K562 (cell line): ENCODE measurements at regions of chr2 and their contacts with region 1.

Region 1: DNA sequence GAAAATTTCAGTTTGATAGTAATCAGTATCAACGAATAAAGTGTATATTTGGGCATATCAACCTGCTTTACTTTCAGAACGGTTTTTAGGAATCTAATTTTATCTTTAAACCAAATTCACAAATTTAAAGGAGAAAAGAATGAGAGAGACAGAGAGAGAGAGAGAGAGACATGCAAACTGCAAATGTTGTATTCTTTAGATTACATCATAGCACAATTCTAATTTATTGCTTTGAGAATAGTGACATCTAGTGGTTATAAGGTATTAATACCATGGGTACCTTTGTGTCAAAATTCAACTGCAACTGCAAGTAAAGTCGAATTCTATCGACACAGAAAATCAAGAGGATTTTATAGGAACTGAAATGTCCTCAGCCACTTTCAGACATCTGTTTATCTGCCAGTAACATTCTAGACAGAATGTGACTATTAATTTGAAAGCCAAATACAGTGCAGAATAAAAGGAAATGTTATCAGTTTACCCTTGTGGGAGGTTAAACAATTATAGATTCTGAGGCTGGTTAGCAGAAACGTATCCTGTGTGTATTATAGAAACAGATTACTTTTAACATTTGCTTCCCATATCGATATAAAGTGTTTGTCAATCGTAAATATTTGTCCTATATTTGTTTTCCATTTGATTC is 529.8 kb upstream of the VRK2 start:
- DNase-seq: peak; percentile 24 to 37 (median 33)
- ATAC-seq: peak; percentile 74
- H3K4me3 ChIP-seq: no peak overlapping the region
- H3K27ac ChIP-seq: no peak overlapping the region
- H3K4me1 ChIP-seq: no peaks in the 10 kb centered on the region
- H3K27me3 ChIP-seq: no peaks in the 10 kb centered on the region
- CTCF ChIP-seq: peak in 2 of 3 experiments; percentile 40 to 69; a peak in 3 of 6 replicates
- EP300 ChIP-seq: no peak
- POLR2A ChIP-seq: no peak
- RAD21 ChIP-seq: peak; percentile 58 to 77

Region 2: DNA sequence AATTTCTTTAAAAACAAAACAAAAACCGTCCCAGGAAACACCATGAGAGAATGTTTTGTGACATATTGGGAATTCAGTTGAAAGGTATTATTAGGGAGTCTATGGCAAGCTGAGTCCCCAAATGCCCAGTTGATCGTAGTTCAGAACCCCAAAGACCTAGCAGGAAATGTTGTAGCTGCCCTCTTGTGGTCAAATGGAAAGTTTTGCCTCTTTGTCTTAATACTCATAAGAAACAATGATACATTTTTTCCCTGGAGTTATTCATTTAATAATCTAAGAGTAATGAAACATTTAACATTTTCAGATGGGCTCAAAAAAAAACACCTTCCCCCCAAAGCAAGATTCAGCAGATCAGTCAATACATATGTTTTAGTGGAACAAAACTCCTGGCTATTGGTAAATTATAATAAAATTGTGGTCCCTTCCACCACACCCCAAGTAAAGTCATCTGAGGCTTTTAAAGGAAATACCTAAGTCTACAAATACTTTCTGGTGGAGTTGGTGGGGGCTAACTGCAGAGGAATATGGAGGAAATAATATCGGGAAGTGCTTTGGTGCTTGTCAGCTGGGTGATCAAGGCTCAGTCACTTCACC is 1555.4 kb before region 1 on chr2:
- CTCF ChIA-PET with region 1: no interaction called
- POLR2A ChIA-PET with region 1: no interaction called
- in situ Hi-C with region 1: loop called (anchors 25 kb)
- intact Hi-C with region 1: no loop called
- DNase-seq: peak; percentile 31 to 48 (median 40)
- ATAC-seq: peak; percentile 76
- H3K4me3 ChIP-seq: no peak overlapping the region
- H3K27ac ChIP-seq: no peak overlapping the region
- H3K4me1 ChIP-seq: no peaks in the 10 kb centered on the region; a peak in 1 of 5 replicates
- H3K27me3 ChIP-seq: no peaks in the 10 kb centered on the region; a peak in 1 of 5 replicates
- CTCF ChIP-seq: peak; percentile 37 to 69 (median 52); a peak in 5 of 6 replicates
- EP300 ChIP-seq: no peak
- POLR2A ChIP-seq: no peak
- RAD21 ChIP-seq: peak; percentile 69 to 77

Region 3: DNA sequence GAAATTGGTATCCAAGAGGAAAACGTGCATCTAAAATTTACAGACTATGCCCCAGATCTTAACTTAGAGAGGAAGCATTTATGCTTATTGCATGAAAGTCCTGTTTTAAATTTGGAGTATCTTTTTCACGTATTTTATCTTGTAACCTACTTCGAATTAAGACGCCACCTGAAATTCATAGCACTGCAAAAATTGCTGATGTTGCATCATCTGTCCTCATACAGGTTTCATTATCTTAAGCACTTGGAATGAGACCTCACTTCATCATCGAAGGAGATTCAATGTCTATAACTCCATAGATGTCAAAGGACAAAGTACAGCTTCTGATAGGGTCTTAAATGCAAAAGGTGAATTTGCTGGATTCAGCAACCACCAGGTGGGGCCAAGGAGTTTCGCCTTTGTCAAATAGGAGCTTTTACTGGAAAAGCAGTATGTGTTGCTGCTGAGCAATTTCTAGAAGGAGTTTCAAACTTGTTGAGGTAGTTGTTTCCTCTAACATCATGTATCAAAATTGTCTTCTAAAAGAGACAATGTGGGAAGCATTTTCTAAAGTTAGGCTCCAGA is 1439.4 kb before region 1 on chr2:
- CTCF ChIA-PET with region 1: interaction called, 3 read pairs
- POLR2A ChIA-PET with region 1: no interaction called
- in situ Hi-C with region 1: no loop called
- intact Hi-C with region 1: loop called (anchors 10 kb)
- DNase-seq: peak in 3 of 4 experiments; percentile 12 to 53 (median 32)
- ATAC-seq: peak; percentile 77
- H3K4me3 ChIP-seq: no peak overlapping the region
- H3K27ac ChIP-seq: no peak overlapping the region
- H3K4me1 ChIP-seq: no peaks in the 10 kb centered on the region
- H3K27me3 ChIP-seq: no peaks in the 10 kb centered on the region; a peak in 2 of 5 replicates
- CTCF ChIP-seq: peak; percentile 56 to 69 (median 66); a peak in 5 of 6 replicates
- EP300 ChIP-seq: no peak
- POLR2A ChIP-seq: no peak
- RAD21 ChIP-seq: peak; percentile 63 to 68